ENCODE measurements at regions of chr22 and their contacts with region 1.

Region 1: GRCh38 chr22:46674367-46674781 is 54.2 kb downstream of the GRAMD4 start:
- DNase-seq: peak; percentile 83
- H3K4me3 Mint-ChIP-seq: peak overlapping the region; percentile 77
- H3K27ac Mint-ChIP-seq: peak overlapping the region; percentile 95
- H3K4me1 Mint-ChIP-seq: peaks cover 16% of the 10 kb centered on the region
- H3K27me3 Mint-ChIP-seq: no peaks in the 10 kb centered on the region

Region 2: GRCh38 chr22:46563381-46564083 is 110.8 kb before region 1 on chr22:
- intact Hi-C with region 1: loop called (anchors 5 kb)
- DNase-seq: peak; percentile 63
- H3K4me3 Mint-ChIP-seq: no peak overlapping the region
- H3K27ac Mint-ChIP-seq: peak overlapping the region; percentile 35
- H3K4me1 Mint-ChIP-seq: peaks cover 7% of the 10 kb centered on the region
- H3K27me3 Mint-ChIP-seq: no peaks in the 10 kb centered on the region

Region 3: GRCh38 chr22:46576556-46577367 is 97.6 kb before region 1 on chr22:
- intact Hi-C with region 1: loop called (anchors 5 kb)
- DNase-seq: peak; percentile 52
- H3K4me3 Mint-ChIP-seq: peak overlapping the region; percentile 82
- H3K27ac Mint-ChIP-seq: peak overlapping the region; percentile 82
- H3K4me1 Mint-ChIP-seq: peaks cover 43% of the 10 kb centered on the region
- H3K27me3 Mint-ChIP-seq: no peaks in the 10 kb centered on the region

Region 4: GRCh38 chr22:46592390-46592872 is 81.9 kb before region 1 on chr22:
- intact Hi-C with region 1: loop called (anchors 1 kb)
- DNase-seq: peak; percentile 52
- H3K4me3 Mint-ChIP-seq: peak overlapping the region; percentile 70
- H3K27ac Mint-ChIP-seq: peak overlapping the region; percentile 94
- H3K4me1 Mint-ChIP-seq: peaks cover 29% of the 10 kb centered on the region
- H3K27me3 Mint-ChIP-seq: no peaks in the 10 kb centered on the region

Region 5: DNA sequence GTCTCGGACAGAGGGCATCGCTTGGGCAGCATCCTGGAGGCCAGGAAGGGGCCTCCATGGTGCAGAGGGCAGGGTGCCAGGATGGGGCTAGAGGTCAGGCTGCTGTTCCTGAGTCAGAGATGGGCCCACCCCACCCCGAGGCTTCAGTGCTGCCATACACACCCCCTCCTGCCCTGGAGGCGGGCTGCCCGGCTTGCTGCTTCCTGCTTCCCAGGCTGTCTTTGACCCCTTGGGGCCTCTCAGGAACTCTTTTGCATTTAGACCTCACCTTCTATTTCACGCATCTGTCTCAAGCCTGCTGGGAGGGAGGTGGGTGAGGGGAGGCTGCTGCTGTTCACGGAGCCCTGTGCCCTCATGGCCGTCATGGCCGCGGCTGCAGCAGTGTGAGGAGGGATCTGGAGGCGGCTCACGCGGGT is 60.8 kb before region 1 on chr22:
- intact Hi-C with region 1: loop called (anchors 2 kb)
- DNase-seq: peak; percentile 12
- H3K4me3 Mint-ChIP-seq: peak overlapping the region; percentile 80
- H3K27ac Mint-ChIP-seq: peak overlapping the region; percentile 89
- H3K4me1 Mint-ChIP-seq: peaks cover 27% of the 10 kb centered on the region
- H3K27me3 Mint-ChIP-seq: no peaks in the 10 kb centered on the region

Region 6: GRCh38 chr22:46649141-46650077 is 25.0 kb before region 1 on chr22:
- intact Hi-C with region 1: loop called (anchors 1 kb)
- DNase-seq: no peak
- H3K4me3 Mint-ChIP-seq: no peak overlapping the region
- H3K27ac Mint-ChIP-seq: peak overlapping the region; percentile 68
- H3K4me1 Mint-ChIP-seq: peaks cover 36% of the 10 kb centered on the region
- H3K27me3 Mint-ChIP-seq: no peaks in the 10 kb centered on the region

Region 7: DNA sequence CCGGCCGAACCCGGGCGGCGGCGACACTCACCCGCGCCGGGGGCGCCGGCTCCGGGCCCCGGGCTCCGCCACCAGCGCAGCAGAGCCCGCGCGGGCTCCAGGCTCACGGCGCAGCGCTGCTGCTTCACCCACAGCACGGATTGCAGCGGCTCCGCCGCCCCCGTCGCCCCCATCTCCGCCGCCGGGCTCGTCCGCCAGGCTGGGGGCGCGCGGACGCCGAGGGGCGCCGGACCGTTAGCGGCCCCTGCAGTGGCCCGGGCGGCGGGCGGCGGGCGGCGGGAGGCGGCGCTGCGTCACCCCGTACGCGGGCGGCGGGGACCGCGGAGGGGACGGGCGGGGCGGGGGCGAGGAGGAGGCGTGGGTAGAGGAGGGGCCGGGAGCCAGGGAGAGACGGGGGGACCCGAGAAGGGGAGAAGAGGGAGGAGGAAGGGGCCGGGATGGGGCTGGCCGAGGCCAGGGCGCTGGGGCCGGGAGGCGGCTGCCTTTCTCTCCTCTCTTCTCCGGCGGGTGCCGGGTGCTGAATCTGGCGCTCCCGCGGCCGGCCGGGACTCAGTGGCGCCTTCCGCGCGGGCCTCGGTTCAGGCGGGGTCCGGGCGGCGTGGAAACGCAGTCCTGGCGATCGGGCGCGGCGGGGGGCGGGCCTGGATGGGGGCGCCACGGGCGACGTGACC is 63.7 kb after region 1 on chr22 and contains the start of gene CERK:
- intact Hi-C with region 1: loop called (anchors 2 kb)
- DNase-seq: peak; percentile 62
- H3K4me3 Mint-ChIP-seq: peak within 1 kb of the TSS; percentile 100
- H3K27ac Mint-ChIP-seq: peak within 1 kb of the TSS; percentile 99
- H3K4me1 Mint-ChIP-seq: peaks cover 34% of the 10 kb centered on the region
- H3K27me3 Mint-ChIP-seq: no peaks in the 10 kb centered on the region
- total RNA-seq, gene CERK: 57.1 and 62.8 TPM in 2 replicates

Measured in activated T-helper 2 cell treated with anti-CD3 and anti-CD28 coated beads, Interferon-gamma antibody, Interleukin-2, Interleukin-4, amounts not matched to agents 10 μg/mL and 5 μg/mL and 100 μg/mL, durations not matched to agents 14 hours and 24 hours and 36 hours (primary cell).